Calu3 (cell line): ENCODE measurements at regions of chr12 and their contacts with region 1.

Region 1: GRCh38 chr12:56127888-56128669 is at the start of gene ESYT1:
- DNase-seq: peak; percentile 99
- H3K4me3 Mint-ChIP-seq: peak within 1 kb of the TSS; percentile 98
- H3K27ac Mint-ChIP-seq: peak within 1 kb of the TSS; percentile 72
- H3K4me1 Mint-ChIP-seq: peaks cover 35% of the 10 kb centered on the region
- H3K27me3 Mint-ChIP-seq: no peaks in the 10 kb centered on the region
- CTCF ChIP-seq: no peak
- total RNA-seq, gene ESYT1: 72.7 and 91.1 TPM in 2 replicates

Region 2: GRCh38 chr12:56084958-56085543 is 43.0 kb before region 1 on chr12:
- CTCF ChIA-PET with region 1: no interaction called
- intact Hi-C with region 1: no loop called
- DNase-seq: peak; percentile 37
- H3K4me3 Mint-ChIP-seq: no peak overlapping the region
- H3K27ac Mint-ChIP-seq: no peak overlapping the region
- H3K4me1 Mint-ChIP-seq: peaks cover 34% of the 10 kb centered on the region
- H3K27me3 Mint-ChIP-seq: no peaks in the 10 kb centered on the region
- CTCF ChIP-seq: peak; percentile 46

Region 3: GRCh38 chr12:56104815-56105608 is 23.1 kb before region 1 on chr12:
- CTCF ChIA-PET with region 1: no interaction called
- intact Hi-C with region 1: no loop called
- DNase-seq: peak; percentile 41
- H3K4me3 Mint-ChIP-seq: peak overlapping the region; percentile 96
- H3K27ac Mint-ChIP-seq: peak overlapping the region; percentile 95
- H3K4me1 Mint-ChIP-seq: peaks cover 21% of the 10 kb centered on the region
- H3K27me3 Mint-ChIP-seq: no peaks in the 10 kb centered on the region
- CTCF ChIP-seq: no peak

Region 4: GRCh38 chr12:56152318-56153033 is 24.4 kb after region 1 on chr12 and contains the start of gene MYL6B:
- CTCF ChIA-PET with region 1: interaction called, 11 read pairs
- intact Hi-C with region 1: no loop called
- DNase-seq: peak; percentile 95
- H3K4me3 Mint-ChIP-seq: peak within 1 kb of the TSS; percentile 73
- H3K27ac Mint-ChIP-seq: peak within 1 kb of the TSS; percentile 78
- H3K4me1 Mint-ChIP-seq: peaks cover 14% of the 10 kb centered on the region
- H3K27me3 Mint-ChIP-seq: no peaks in the 10 kb centered on the region
- CTCF ChIP-seq: no peak
- total RNA-seq, gene MYL6B: 52.4 and 53.7 TPM in 2 replicates

Region 5: DNA sequence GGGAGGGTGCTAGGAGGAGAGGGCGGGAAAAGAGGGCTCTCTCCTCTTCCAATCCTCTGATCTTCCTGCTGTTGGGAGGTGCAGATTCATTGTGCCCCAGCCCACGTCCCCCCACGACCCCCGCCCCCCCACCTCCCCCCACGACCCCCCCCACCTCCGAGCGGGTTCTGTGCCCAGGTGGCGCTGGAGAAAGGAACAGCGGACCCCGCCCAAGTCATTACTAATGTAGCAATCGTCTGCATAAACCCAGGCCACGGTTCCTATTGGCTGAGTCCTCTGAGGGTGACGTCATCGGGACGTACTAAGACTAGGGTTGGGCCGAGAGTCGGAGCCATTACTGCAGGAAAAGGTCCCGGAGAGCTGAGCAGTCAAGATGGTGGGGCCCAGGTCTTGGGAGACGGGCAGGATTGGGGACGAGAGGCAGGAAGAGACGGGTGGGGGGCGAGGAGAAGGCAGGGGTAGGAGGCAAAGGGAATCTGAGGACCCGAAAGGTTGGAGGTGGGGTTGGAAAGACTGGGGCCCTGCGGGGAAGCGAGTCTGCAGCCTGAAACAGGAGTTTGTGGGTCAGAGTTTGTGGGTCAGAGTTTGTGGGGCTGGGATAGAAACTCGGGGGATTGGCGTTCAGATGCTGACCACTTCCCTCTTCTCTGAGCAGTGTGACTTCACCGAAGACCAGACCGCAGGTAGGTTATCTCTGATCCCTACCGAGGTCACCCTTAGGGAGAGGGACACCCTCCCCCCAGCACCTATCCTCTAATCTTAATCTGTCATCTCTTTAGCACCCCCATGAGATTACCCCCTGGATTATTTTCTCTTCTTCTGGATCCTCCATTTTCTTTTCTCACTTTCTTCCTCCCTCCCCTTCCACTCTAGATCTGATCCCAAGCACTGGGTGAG is 30.2 kb after region 1 on chr12 and contains the start of gene MYL6:
- CTCF ChIA-PET with region 1: interaction called, 7 read pairs
- intact Hi-C with region 1: loop called (anchors 2 kb)
- DNase-seq: peak; percentile 96
- H3K4me3 Mint-ChIP-seq: peak within 1 kb of the TSS; percentile 98
- H3K27ac Mint-ChIP-seq: peak within 1 kb of the TSS; percentile 100
- H3K4me1 Mint-ChIP-seq: peaks cover 32% of the 10 kb centered on the region
- H3K27me3 Mint-ChIP-seq: no peaks in the 10 kb centered on the region
- CTCF ChIP-seq: no peak
- total RNA-seq, gene MYL6: 1,037 and 1,130 TPM in 2 replicates

Region 6: GRCh38 chr12:56224102-56224701 is 96.1 kb after region 1 on chr12 and contains the start of gene NABP2:
- CTCF ChIA-PET with region 1: interaction called, 25 read pairs
- intact Hi-C with region 1: no loop called
- DNase-seq: peak; percentile 99
- H3K4me3 Mint-ChIP-seq: peak within 1 kb of the TSS; percentile 78
- H3K27ac Mint-ChIP-seq: peak within 1 kb of the TSS; percentile 73
- H3K4me1 Mint-ChIP-seq: peaks cover 17% of the 10 kb centered on the region
- H3K27me3 Mint-ChIP-seq: no peaks in the 10 kb centered on the region
- CTCF ChIP-seq: peak; percentile 95
- total RNA-seq, gene NABP2: 55.5 and 63.3 TPM in 2 replicates

Region 7: DNA sequence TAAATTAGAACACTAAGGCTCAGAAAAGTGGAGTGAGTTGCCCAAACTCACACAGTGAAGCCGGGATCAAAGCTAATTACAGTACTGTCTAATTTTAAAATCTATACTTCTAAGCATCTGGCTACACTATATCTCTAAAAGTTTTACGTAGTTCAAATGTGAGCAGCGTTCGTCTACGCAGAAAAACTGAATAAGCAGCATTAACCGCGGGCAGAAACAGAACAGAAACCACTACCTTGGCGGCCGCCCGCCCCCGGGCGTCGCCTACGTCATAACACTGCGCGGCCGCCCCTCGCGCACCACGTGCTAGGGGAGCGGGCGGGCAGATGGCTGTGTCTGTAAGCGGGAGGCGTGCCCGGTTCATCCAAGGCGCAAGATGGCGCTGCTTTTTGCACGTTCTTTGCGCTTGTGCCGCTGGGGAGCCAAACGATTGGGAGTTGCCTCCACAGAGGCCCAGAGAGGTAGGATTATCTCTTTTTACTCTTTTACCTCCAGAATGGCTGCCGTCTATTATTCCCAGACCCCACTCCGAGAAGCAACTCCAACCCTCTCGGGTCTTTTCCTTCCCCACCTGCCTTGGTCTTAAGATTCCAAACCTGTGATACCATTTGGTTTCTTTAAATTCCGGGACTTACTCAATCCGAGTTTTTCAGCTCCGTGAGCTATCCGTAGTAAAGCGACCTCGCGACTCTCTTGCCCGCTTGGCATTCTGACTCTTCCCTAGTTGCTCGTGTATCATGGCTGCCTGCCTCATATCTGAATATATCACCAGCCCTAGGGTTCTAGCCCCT is 340.3 kb after region 1 on chr12 and contains the start of gene SPRYD4:
- CTCF ChIA-PET with region 1: interaction called, 4 read pairs
- intact Hi-C with region 1: loop called (anchors 10 kb)
- DNase-seq: peak; percentile 96
- H3K4me3 Mint-ChIP-seq: peak within 1 kb of the TSS; percentile 89
- H3K27ac Mint-ChIP-seq: peak within 1 kb of the TSS; percentile 96
- H3K4me1 Mint-ChIP-seq: peaks cover 9% of the 10 kb centered on the region
- H3K27me3 Mint-ChIP-seq: no peaks in the 10 kb centered on the region
- CTCF ChIP-seq: no peak
- total RNA-seq, gene SPRYD4: 6.1 and 6.6 TPM in 2 replicates